ENCODE measurements at regions of chr6 and their contacts with region 1.

Region 1: GRCh38 chr6:3742426-3743344 is 8.8 kb downstream of the PXDC1 start:
- DNase-seq: peak; percentile 92
- H3K4me3 Mint-ChIP-seq: peak overlapping the region; percentile 40
- H3K27ac Mint-ChIP-seq: no peak overlapping the region
- H3K4me1 Mint-ChIP-seq: peaks cover 14% of the 10 kb centered on the region
- H3K27me3 Mint-ChIP-seq: peaks cover 13% of the 10 kb centered on the region

Region 2: GRCh38 chr6:3887150-3887700 is 144.5 kb after region 1 on chr6:
- CTCF ChIA-PET with region 1: interaction called, 14 read pairs
- POLR2A ChIA-PET with region 1: no interaction called
- intact Hi-C with region 1: loop called (anchors 1 kb)
- DNase-seq: peak; percentile 20
- H3K4me3 Mint-ChIP-seq: no peak overlapping the region
- H3K27ac Mint-ChIP-seq: no peak overlapping the region
- H3K4me1 Mint-ChIP-seq: no peaks in the 10 kb centered on the region
- H3K27me3 Mint-ChIP-seq: peaks cover 1% of the 10 kb centered on the region

Region 3: DNA sequence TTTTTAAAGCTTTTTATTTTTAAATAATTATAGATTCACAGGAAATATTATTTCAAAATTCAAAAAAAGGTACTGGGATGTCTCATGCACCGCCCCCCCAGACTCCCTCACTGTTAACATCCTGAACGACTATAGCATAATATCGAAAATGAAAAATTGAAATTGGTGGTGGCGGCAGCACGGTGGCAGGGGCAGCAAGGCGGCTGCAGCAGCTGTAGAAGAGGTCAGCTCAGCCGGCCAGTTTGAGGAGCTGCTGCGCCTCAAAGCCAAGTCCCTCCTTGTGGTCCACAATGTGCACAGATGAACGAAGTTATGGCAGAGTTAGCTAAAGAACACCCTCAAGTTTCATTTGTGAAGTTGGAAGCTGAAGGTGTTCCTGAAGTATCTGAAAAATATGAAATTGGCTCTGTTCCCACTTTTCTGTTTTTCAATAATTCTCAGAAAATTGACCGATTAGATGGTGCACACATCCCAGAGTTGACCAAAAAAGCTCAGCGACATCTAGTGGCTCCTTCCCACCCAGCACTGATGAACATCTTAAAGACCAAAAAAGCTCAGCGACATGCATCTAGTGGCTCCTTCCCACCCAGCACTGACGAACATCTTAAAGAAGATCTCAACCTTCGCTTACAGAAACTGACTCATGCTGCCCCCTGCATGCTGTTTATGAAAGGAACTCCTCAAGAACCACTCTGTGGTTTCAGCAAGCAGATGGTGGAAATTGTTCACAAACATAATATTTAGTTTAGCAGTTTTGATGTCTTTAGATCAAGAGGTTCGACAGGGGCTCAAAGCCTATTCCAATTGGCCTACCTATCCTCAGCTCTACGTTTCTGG is 235.4 kb after region 1 on chr6:
- CTCF ChIA-PET with region 1: interaction called, 98 read pairs
- POLR2A ChIA-PET with region 1: no interaction called
- intact Hi-C with region 1: loop called (anchors 1 kb)
- DNase-seq: peak; percentile 62
- H3K4me3 Mint-ChIP-seq: no peak overlapping the region
- H3K27ac Mint-ChIP-seq: no peak overlapping the region
- H3K4me1 Mint-ChIP-seq: peaks cover 7% of the 10 kb centered on the region
- H3K27me3 Mint-ChIP-seq: peaks cover 1% of the 10 kb centered on the region

Region 4: DNA sequence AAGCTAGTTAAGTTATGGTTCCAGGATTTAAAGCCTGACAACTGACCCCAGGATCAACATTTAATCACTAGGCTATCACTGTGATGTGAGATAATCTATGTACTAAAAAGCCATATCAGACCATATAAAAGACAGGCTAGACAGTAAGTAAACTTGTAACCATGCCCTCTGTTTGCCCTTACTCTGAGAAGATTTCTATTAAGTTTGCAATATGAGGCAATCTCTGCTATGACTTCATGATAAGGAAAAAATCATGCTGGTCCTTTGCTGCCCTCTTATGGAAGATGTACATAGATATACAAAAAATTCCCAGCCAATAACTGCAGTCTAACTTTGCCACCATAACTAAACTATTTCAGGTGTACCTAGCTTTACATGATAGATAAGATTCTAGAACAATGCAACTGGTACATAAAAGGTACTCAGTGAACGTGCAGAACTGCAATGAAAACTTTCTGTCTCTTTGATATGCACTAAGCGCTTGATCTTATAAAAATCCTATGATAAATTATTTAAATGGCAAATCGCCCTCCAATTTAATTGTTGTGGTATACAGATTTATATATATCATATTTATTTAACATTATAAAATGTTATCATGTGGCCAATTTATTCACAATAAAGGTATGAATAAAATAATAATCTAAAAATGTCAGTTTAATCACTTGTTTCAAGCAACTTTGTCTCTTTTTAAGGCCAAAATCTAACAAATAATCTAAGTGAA is 265.8 kb after region 1 on chr6:
- CTCF ChIA-PET with region 1: interaction called, 19 read pairs
- POLR2A ChIA-PET with region 1: no interaction called
- intact Hi-C with region 1: no loop called
- DNase-seq: no peak
- H3K4me3 Mint-ChIP-seq: no peak overlapping the region
- H3K27ac Mint-ChIP-seq: no peak overlapping the region
- H3K4me1 Mint-ChIP-seq: peaks cover 53% of the 10 kb centered on the region
- H3K27me3 Mint-ChIP-seq: no peaks in the 10 kb centered on the region

Region 5: DNA sequence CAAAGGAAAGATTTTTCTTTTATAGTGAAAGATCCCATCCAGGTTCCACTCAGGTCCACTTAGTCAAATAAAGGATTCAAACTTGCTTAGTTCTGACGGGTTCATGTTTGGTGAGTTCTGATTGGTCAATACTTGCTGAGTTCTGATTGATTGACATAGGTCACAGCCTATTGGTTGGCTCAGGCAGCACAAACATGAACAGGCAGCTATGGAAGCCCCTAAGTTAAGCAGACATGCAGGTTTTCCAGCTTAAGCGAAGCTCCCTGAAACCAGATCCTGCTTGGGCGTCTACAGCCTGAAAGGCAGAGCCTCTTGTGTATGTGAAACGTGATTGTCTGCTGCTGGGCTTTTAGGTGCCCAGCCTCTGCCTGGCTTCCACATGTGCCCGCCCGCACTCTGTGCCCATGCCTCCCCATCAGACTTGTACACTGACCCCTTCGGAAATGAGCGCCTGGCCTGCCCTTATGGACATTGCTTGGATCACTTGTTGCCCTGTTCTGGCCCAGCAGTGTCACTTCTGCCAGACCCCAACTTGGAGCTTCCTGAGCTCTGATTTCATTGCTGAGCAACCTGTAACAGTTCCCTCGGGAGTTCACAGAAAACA is 438.1 kb after region 1 on chr6:
- CTCF ChIA-PET with region 1: no interaction called
- POLR2A ChIA-PET with region 1: no interaction called
- intact Hi-C with region 1: no loop called
- DNase-seq: no peak
- H3K4me3 Mint-ChIP-seq: no peak overlapping the region
- H3K27ac Mint-ChIP-seq: no peak overlapping the region
- H3K4me1 Mint-ChIP-seq: peaks cover 14% of the 10 kb centered on the region
- H3K27me3 Mint-ChIP-seq: peaks cover 2% of the 10 kb centered on the region

Region 6: DNA sequence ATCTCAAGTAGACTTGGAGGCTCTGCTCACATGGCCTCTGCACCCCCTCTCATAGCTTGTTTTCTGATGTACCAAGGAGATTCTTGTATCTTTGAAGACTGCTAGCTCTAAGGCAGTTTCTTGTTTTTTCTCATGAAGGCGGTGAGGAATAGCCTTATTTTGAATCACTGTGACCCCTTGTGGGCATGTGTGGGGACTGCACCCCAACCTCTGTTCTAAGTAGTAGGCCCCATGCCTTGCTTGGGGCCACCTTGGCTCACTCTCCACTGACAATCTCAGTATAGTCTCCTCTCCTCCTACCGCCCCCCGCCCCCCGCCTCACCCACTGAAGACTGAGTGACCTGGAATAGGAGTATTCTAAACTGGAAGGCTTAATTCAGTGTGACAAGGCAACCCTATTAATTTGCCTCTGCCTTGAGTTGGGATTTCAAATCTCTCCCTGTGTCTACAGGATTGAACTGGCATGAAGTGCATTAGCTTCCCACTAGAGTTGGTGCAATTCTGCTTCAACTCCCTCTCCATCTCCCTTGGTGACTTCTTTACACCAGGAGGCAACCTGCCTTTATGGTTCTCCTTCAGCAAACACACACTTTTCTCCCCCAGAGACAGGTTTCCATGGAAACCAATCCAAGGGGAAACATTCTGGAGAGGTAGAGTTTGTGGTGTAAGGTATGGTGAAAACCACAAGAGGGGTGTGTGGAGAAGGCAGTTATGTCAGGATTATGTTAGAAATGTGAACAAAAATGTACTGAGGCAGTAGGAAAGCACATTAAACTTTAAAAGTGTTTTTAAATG is 468.1 kb after region 1 on chr6:
- CTCF ChIA-PET with region 1: interaction called, 7 read pairs
- POLR2A ChIA-PET with region 1: no interaction called
- intact Hi-C with region 1: loop called (anchors 1 kb)
- DNase-seq: peak; percentile 77
- H3K4me3 Mint-ChIP-seq: no peak overlapping the region
- H3K27ac Mint-ChIP-seq: no peak overlapping the region
- H3K4me1 Mint-ChIP-seq: peaks cover 13% of the 10 kb centered on the region
- H3K27me3 Mint-ChIP-seq: peaks cover 2% of the 10 kb centered on the region

Measured in activated CD4-positive, alpha-beta memory T cell treated with anti-CD3 and anti-CD28 coated beads for 36 hours (primary cell).